ENCODE measurements at regions of chr14 and their contacts with region 1.

Region 1: GRCh38 chr14:56117765-56118610 is at the start of gene PELI2:
- DNase-seq: peak; percentile 84 to 91
- ATAC-seq: peak; percentile 86 to 94 (median 87)
- H3K4me3 ChIP-seq: peak within 1 kb of the TSS; percentile 97
- H3K4me3 Mint-ChIP-seq: peak within 1 kb of the TSS; percentile 97
- H3K27ac ChIP-seq: peak within 1 kb of the TSS; percentile 97
- H3K27ac Mint-ChIP-seq: peak within 1 kb of the TSS; percentile 95 to 96
- H3K4me1 ChIP-seq: peaks cover 17% of the 10 kb centered on the region
- H3K4me1 Mint-ChIP-seq: peaks cover 40 to 42% of the 10 kb centered on the region in 2 donors
- H3K27me3 ChIP-seq: no peaks in the 10 kb centered on the region
- H3K27me3 Mint-ChIP-seq: peaks cover under 1 to 5% of the 10 kb centered on the region in 2 donors
- CTCF ChIP-seq: no peak
- total RNA-seq, gene PELI2: 16.4 to 25.0 (median 24.9) TPM

Region 2: DNA sequence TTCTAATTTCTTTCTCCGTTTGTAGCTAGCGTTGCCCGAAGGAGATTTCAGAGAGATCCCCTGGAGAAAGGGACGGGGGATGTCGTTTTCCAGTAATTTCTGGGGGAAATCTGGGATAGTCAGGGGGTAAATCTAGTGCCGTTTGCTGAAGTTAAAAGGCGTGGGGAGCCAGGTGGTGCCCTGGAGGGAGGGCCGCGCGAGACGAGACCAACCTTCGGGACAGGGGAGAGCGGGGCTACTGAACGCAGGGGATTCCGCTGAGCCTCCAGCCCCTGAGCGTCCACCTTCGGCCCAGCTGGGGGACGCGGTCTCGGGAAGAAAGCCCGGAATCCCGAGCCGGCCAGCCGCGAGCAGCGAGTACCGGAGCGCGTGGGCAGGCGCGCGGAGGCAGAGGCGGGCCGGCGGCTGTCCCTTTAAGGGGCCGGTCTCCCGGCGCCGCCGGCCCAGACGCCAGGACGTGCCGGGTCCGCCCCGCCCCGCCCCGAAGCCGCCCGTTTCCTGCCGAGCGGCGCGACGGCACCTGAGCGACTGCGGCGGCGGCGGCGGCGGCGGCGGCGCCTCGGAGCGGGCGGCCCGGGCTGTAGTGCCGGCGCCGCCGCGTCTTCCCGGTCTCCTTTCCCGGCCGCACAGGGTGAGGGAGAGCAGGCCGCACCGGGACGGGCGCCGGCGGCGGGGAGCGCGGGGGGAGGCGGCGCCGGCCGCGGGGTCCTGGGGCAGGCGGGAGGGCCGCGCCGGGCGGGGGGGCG is 538.1 kb before region 1 on chr14 and contains the start of gene KTN1:
- intact Hi-C with region 1: loop called (anchors 5 kb)
- DNase-seq: peak; percentile 83 to 89
- ATAC-seq: peak; percentile 88 to 95 (median 90)
- H3K4me3 ChIP-seq: peak within 1 kb of the TSS; percentile 83
- H3K4me3 Mint-ChIP-seq: peak within 1 kb of the TSS; percentile 97
- H3K27ac ChIP-seq: peak within 1 kb of the TSS; percentile 83
- H3K27ac Mint-ChIP-seq: peak within 1 kb of the TSS; percentile 90 to 91
- H3K4me1 ChIP-seq: peaks cover 18% of the 10 kb centered on the region
- H3K4me1 Mint-ChIP-seq: peaks cover 24 to 27% of the 10 kb centered on the region in 2 donors
- H3K27me3 ChIP-seq: no peaks in the 10 kb centered on the region
- H3K27me3 Mint-ChIP-seq: no peaks in the 10 kb centered on the region
- CTCF ChIP-seq: no peak
- total RNA-seq, gene KTN1: 63.1 to 96.7 (median 72.8) TPM

Region 3: DNA sequence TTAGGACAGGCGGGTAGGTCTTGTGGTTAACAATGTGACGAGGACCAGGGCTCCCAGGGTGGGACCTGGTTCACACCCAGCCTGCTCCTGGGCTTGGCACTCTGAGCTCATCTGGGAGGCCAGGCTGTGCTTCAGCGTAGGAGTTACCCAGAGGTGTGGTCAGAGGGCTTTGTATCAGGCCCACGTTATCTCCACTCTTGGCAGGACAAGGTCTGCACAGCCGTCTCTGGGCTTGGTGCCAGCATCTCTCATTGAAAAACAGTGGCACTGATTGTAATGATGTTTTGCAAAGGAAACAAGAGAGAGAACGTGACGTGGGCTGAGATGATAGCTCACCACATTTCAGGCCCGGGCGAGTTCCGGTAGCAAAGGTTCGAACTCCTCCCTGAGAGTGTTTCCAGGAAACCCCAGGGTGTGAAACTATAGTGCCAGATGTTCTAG is 310.9 kb before region 1 on chr14:
- intact Hi-C with region 1: loop called (anchors 10 kb)
- DNase-seq: peak; percentile 63 to 90
- ATAC-seq: peak; percentile 82 to 92 (median 88)
- H3K4me3 ChIP-seq: no peak overlapping the region
- H3K4me3 Mint-ChIP-seq: peak overlapping the region; percentile 78
- H3K27ac ChIP-seq: peak overlapping the region; percentile 85
- H3K27ac Mint-ChIP-seq: peak overlapping the region; percentile 88 to 96
- H3K4me1 ChIP-seq: peaks cover 29% of the 10 kb centered on the region
- H3K4me1 Mint-ChIP-seq: peaks cover 63 to 65% of the 10 kb centered on the region in 2 donors
- H3K27me3 ChIP-seq: no peaks in the 10 kb centered on the region
- H3K27me3 Mint-ChIP-seq: no peaks in the 10 kb centered on the region
- CTCF ChIP-seq: no peak

Region 4: DNA sequence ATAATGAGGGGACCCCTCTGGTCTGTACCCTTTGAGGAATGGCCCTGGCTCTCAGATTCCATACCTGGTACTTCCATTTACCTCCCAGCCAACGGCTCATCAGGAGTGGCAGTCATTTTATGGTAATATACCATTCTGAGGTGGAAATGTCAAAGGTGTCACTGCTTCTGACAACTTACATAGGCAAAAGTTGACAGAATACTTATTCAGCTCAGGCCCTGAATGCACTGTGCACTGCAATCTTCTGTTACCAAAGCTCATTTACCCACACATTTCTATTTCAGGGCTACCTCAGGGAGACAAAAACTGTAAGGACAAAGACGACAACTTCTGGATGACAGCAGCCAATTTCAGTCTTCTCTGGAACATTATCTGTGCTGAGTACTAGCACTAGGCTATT is 249.4 kb after region 1 on chr14:
- intact Hi-C with region 1: no loop called
- DNase-seq: no peak
- ATAC-seq: no peak
- H3K4me3 ChIP-seq: no peak overlapping the region
- H3K4me3 Mint-ChIP-seq: no peak overlapping the region
- H3K27ac ChIP-seq: no peak overlapping the region
- H3K27ac Mint-ChIP-seq: no peak overlapping the region
- H3K4me1 ChIP-seq: no peaks in the 10 kb centered on the region
- H3K4me1 Mint-ChIP-seq: no peaks in the 10 kb centered on the region
- H3K27me3 ChIP-seq: no peaks in the 10 kb centered on the region
- H3K27me3 Mint-ChIP-seq: peaks cover 0 to 2% of the 10 kb centered on the region in 2 donors
- CTCF ChIP-seq: no peak

Measured in natural killer cell (primary cell).